ENCODE measurements at regions of chr9 and their contacts with region 1.

Region 1: GRCh38 chr9:34252670-34253459 is 74.0 kb downstream of the UBAP1 start:
- DNase-seq: peak; percentile 69 to 83 (median 81)
- ATAC-seq: peak; percentile 37 to 71
- H3K4me3 ChIP-seq: no peak overlapping the region
- H3K27ac ChIP-seq: peak overlapping the region; percentile 88
- H3K4me1 ChIP-seq: peaks cover 27% of the 10 kb centered on the region
- H3K27me3 ChIP-seq: no peaks in the 10 kb centered on the region

Region 2: GRCh38 chr9:33924978-33925797 is 327.7 kb before region 1 on chr9:
- intact Hi-C with region 1: loop called in 1 of 4 experiments (anchors 10 kb)
- DNase-seq: peak in 2 of 3 donors; percentile 37 to 75
- ATAC-seq: peak; percentile 59
- H3K4me3 ChIP-seq: no peak overlapping the region
- H3K27ac ChIP-seq: no peak overlapping the region
- H3K4me1 ChIP-seq: no peaks in the 10 kb centered on the region
- H3K27me3 ChIP-seq: no peaks in the 10 kb centered on the region

Region 3: GRCh38 chr9:34079181-34079580 is 173.7 kb before region 1 on chr9:
- intact Hi-C with region 1: loop called in 1 of 4 experiments (anchors 5 kb)
- DNase-seq: no peak
- ATAC-seq: no peak
- H3K4me3 ChIP-seq: no peak overlapping the region
- H3K27ac ChIP-seq: no peak overlapping the region
- H3K4me1 ChIP-seq: peaks cover 4% of the 10 kb centered on the region
- H3K27me3 ChIP-seq: no peaks in the 10 kb centered on the region

Region 4: DNA sequence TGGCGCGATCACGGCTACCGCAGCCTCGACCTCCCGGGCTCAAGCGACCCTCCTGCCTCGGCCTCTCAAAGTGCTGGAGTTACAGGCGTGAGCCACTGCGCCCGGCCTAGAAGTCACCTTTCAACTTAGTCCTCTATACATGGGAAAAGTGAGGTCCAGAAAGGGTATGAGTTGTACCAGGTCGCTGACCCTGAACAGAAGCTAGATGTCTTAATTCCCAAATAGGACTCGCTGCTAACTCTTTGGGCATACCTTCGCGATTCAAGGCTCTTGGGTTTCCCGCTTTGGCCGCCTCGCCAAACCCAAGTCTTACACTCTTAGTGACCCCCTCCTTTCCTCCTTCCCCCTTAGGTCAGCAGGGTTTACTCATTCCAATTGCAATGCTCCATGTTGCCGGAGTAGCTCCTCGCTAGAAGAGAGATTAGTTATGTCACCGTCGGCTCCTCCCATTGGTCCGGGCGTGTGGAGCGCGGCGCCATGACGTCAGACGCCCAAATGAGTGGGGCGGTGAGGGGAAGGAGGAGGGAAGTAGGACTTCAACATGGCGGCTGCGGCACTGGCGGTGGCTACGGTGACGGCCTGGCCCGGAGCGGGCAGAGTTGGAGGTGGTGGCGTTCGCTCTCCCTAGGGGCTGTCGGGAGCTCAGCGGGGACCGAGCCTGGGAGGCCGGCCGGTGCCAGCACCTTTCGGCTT is 74.2 kb before region 1 on chr9 and contains the start of gene UBAP1:
- intact Hi-C with region 1: loop called in 2 of 4 experiments (anchors 10 kb)
- DNase-seq: peak; percentile 97 to 98 (median 98)
- ATAC-seq: peak; percentile 99 to 100
- H3K4me3 ChIP-seq: peak within 1 kb of the TSS; percentile 72
- H3K27ac ChIP-seq: peak within 1 kb of the TSS; percentile 86
- H3K4me1 ChIP-seq: no peaks in the 10 kb centered on the region
- H3K27me3 ChIP-seq: no peaks in the 10 kb centered on the region
- total RNA-seq, gene UBAP1: 43.6 to 51.1 (median 46.6) TPM

Region 5: DNA sequence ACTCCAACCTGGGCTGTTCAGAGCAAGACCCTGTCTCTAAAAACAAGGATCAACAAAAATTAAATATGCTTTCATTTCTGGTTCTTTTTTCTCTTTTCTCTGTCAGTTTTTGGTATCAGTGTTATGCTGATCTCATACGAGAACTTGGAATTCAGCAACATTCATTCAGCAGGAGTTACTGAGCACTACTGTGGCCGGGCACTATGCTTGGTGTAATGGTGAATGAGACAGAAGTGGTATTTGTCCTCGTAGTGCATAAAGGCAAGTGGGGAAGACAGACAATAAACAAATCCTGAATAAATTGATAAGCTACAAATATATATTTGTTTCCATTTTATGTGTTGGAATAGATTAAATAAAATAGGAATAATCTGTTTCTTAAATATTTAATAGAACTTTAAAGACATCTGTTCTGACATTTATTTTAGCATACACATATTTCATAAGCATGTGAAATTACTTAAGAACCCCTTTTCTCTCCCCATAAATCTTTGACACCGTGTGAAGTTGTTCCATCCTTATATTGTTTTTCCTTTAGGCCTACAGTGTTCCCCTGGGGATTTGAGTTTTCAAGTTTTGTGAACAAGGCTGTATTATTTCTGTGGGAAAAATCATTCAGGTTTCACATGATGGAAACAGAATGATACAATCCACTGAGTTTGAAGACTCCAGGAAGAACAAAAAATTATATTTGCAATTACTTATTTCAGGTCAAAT is 49.4 kb before region 1 on chr9:
- intact Hi-C with region 1: loop called in 1 of 4 experiments (anchors 10 kb)
- DNase-seq: no peak
- ATAC-seq: no peak
- H3K4me3 ChIP-seq: no peak overlapping the region
- H3K27ac ChIP-seq: no peak overlapping the region
- H3K4me1 ChIP-seq: peaks cover 7% of the 10 kb centered on the region
- H3K27me3 ChIP-seq: no peaks in the 10 kb centered on the region

Region 6: DNA sequence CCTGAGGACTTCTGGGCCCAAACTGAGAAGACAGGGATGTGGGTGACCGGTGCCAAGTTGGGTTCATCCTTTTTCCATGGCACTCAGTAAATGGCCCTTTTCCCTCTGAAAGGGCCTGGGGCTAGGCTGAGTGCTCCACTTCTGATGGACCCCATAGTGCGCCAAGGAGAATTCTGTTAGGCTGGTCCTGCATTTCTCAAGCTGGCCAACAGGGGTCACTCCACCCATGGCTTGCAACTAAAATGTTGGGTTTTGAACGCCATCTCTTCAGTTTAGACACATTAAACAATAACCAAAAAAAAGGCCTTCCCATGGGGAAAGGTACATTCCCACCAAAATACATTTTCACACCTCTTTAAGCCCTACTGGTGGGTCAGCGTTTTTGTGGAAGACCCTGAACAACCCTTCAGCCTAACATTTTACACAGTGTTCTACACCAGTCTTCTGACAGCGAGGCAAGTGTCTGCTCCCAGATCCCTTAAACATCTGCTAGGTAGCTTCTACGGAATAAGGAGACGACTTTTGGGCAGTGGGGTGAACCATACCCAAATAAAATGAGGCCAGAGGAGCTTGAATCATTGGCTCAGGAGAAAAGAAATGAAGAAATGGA is 309.4 kb after region 1 on chr9:
- intact Hi-C with region 1: no loop called
- DNase-seq: no peak
- ATAC-seq: no peak
- H3K4me3 ChIP-seq: no peak overlapping the region
- H3K27ac ChIP-seq: no peak overlapping the region
- H3K4me1 ChIP-seq: peaks cover 13% of the 10 kb centered on the region
- H3K27me3 ChIP-seq: no peaks in the 10 kb centered on the region